Activated CD4-positive, alpha-beta memory T cell treated with anti-CD3 and anti-CD28 coated beads for 36 hours (primary cell): ENCODE measurements at regions of chr12 and their contacts with region 1.

Region 1: GRCh38 chr12:69470189-69471075 is at the start of gene FRS2:
- DNase-seq: peak; percentile 92
- H3K4me3 Mint-ChIP-seq: peak within 1 kb of the TSS; percentile 98
- H3K27ac Mint-ChIP-seq: peak within 1 kb of the TSS; percentile 93
- H3K4me1 Mint-ChIP-seq: peaks cover 41% of the 10 kb centered on the region
- H3K27me3 Mint-ChIP-seq: no peaks in the 10 kb centered on the region
- total RNA-seq, gene FRS2: 8.6 to 9.5 TPM

Region 2: GRCh38 chr12:69290545-69291277 is 179.7 kb before region 1 on chr12:
- CTCF ChIA-PET with region 1: no interaction called
- POLR2A ChIA-PET with region 1: interaction called, 3 read pairs
- intact Hi-C with region 1: loop called (anchors 10 kb)
- DNase-seq: peak; percentile 87
- H3K4me3 Mint-ChIP-seq: no peak overlapping the region
- H3K27ac Mint-ChIP-seq: no peak overlapping the region
- H3K4me1 Mint-ChIP-seq: peaks cover 7% of the 10 kb centered on the region
- H3K27me3 Mint-ChIP-seq: peaks cover 15% of the 10 kb centered on the region

Region 3: GRCh38 chr12:69484428-69484827 is 14.0 kb after region 1 on chr12:
- CTCF ChIA-PET with region 1: no interaction called
- POLR2A ChIA-PET with region 1: no interaction called
- intact Hi-C with region 1: loop called (anchors 2 kb)
- DNase-seq: no peak
- H3K4me3 Mint-ChIP-seq: no peak overlapping the region
- H3K27ac Mint-ChIP-seq: no peak overlapping the region
- H3K4me1 Mint-ChIP-seq: peaks cover 38% of the 10 kb centered on the region
- H3K27me3 Mint-ChIP-seq: no peaks in the 10 kb centered on the region